Activated CD8-positive, alpha-beta T cell treated with anti-CD3 and anti-CD28 coated beads, Interleukin-2, amount 10 ng/mL, durations not matched to agents 7 days and 5 days (primary cell): ENCODE measurements at regions of chr17 and their contacts with region 1.

Region 1: GRCh38 chr17:28644985-28645939 is at the start of gene BLTP2:
- DNase-seq: peak; percentile 97
- ATAC-seq: peak; percentile 98
- H3K4me3 Mint-ChIP-seq: peak within 1 kb of the TSS; percentile 87
- H3K27ac Mint-ChIP-seq: peak within 1 kb of the TSS; percentile 84
- H3K4me1 Mint-ChIP-seq: peaks cover 39% of the 10 kb centered on the region
- H3K27me3 Mint-ChIP-seq: no peaks in the 10 kb centered on the region
- total RNA-seq, gene BLTP2: 162 to 169 TPM

Region 2: GRCh38 chr17:28661635-28662537 is 16.6 kb after region 1 on chr17 and contains the starts of genes SDF2 and SUPT6H:
- CTCF ChIA-PET with region 1: interaction called, 104 read pairs
- POLR2A ChIA-PET with region 1: interaction called, 67 read pairs
- DNase-seq: peak; percentile 96
- ATAC-seq: peak; percentile 90
- H3K4me3 Mint-ChIP-seq: peak within 1 kb of the TSS; percentile 99
- H3K27ac Mint-ChIP-seq: peak within 1 kb of the TSS; percentile 100
- H3K4me1 Mint-ChIP-seq: peaks cover 36% of the 10 kb centered on the region
- H3K27me3 Mint-ChIP-seq: no peaks in the 10 kb centered on the region
- total RNA-seq, gene SDF2: 51.7 to 54.5 TPM
- total RNA-seq, gene SUPT6H: 69.4 to 72.8 TPM

Region 3: DNA sequence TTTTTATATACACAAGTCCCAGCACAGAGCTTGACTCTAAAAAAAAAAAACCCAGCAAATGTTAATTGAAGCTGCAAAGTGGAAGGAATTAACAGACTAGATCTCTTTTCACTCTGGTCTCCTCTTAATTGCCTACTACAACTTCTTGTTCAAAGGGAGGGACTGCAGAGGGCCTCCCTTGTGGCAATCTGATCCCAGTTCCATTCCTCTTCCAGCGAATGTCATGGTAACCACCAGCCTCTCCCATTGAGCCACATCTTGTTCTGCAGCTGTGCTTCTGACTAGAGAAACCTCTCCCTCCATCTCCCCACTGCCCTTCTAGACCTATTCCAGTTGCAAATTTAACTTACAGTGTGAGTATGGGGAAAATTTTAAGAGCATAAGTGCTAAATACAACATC is 22.6 kb after region 1 on chr17:
- CTCF ChIA-PET with region 1: interaction called, 104 read pairs
- POLR2A ChIA-PET with region 1: interaction called, 67 read pairs
- DNase-seq: no peak
- ATAC-seq: no peak
- H3K4me3 Mint-ChIP-seq: no peak overlapping the region
- H3K27ac Mint-ChIP-seq: no peak overlapping the region
- H3K4me1 Mint-ChIP-seq: peaks cover 34% of the 10 kb centered on the region
- H3K27me3 Mint-ChIP-seq: no peaks in the 10 kb centered on the region

Region 4: GRCh38 chr17:28675980-28676379 is 30.7 kb after region 1 on chr17:
- CTCF ChIA-PET with region 1: interaction called, 32 read pairs
- POLR2A ChIA-PET with region 1: interaction called, 3 read pairs
- DNase-seq: peak; percentile 24
- ATAC-seq: no peak
- H3K4me3 Mint-ChIP-seq: no peak overlapping the region
- H3K27ac Mint-ChIP-seq: no peak overlapping the region
- H3K4me1 Mint-ChIP-seq: no peaks in the 10 kb centered on the region
- H3K27me3 Mint-ChIP-seq: no peaks in the 10 kb centered on the region

Region 5: GRCh38 chr17:28710861-28711722 is 65.8 kb after region 1 on chr17:
- CTCF ChIA-PET with region 1: interaction called, 11 read pairs
- POLR2A ChIA-PET with region 1: interaction called, 5 read pairs
- DNase-seq: peak; percentile 91
- ATAC-seq: peak; percentile 91
- H3K4me3 Mint-ChIP-seq: peak overlapping the region; percentile 86
- H3K27ac Mint-ChIP-seq: peak overlapping the region; percentile 98
- H3K4me1 Mint-ChIP-seq: peaks cover 20% of the 10 kb centered on the region
- H3K27me3 Mint-ChIP-seq: peaks cover 9% of the 10 kb centered on the region

Region 6: GRCh38 chr17:28720247-28720996 is 75.2 kb after region 1 on chr17:
- CTCF ChIA-PET with region 1: interaction called, 13 read pairs
- POLR2A ChIA-PET with region 1: interaction called, 5 read pairs
- DNase-seq: peak; percentile 61
- ATAC-seq: peak; percentile 3
- H3K4me3 Mint-ChIP-seq: peak overlapping the region; percentile 97
- H3K27ac Mint-ChIP-seq: peak overlapping the region; percentile 97
- H3K4me1 Mint-ChIP-seq: peaks cover 61% of the 10 kb centered on the region
- H3K27me3 Mint-ChIP-seq: peaks cover 15% of the 10 kb centered on the region